Aorta (tissue), 5 donors: ENCODE measurements at regions of chr6 and their contacts with region 1.

Region 1: DNA sequence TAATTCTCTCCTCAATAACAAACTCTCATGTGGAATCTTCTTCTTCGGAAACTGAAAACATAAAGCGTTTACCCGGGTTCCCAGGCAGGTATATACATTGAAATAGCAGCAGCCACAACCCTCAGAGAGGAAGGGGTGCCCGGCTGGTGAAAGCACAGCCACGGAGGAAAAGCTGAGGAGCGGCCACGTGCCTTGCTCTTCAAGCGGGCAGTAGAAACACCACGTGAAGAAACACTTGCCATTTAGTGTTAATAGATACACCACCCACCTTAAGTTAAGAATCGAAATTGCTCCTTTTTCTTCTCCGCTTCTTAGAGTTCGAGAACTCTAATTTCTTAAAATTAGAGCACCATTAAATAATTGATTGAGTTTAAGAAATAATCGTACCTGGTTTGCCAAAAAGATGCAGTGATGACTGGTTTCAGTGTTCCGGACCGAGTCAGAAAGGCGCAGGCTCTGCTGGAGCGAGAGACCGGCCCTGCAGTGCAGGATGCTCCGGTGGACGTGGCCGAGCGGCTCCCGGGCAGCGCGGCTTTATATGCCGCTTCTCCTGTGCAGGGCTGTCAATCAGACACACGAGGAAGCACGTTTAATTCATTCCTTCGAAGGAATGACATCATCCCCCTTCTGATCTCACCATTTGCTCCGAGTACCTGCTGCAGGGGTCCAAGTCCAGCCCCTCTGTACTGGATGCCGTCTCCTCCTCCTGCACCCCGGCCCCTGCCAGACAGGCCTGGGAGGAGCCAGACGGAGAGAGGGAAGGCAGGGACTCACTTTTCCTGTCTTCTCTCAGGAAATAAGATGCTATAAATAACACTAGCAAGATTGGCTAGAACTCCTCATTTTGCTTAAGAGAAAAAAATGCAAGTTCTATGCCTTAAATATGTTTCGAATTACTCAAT is at the start of gene THBS2:
- DNase-seq: peak; percentile 91 to 94
- ATAC-seq: peak; percentile 86
- H3K4me3 ChIP-seq: peak within 1 kb of the TSS; percentile 60 to 68
- H3K27ac ChIP-seq: peak within 1 kb of the TSS in 1 of 2 donors; percentile 73
- H3K4me1 ChIP-seq: no peaks in the 10 kb centered on the region
- H3K27me3 ChIP-seq: no peaks in the 10 kb centered on the region
- total RNA-seq, gene THBS2: 700 to 1,026 TPM

Region 2: GRCh38 chr6:169452117-169452868 is 198.7 kb after region 1 on chr6:
- intact Hi-C with region 1: loop called in 1 of 2 experiments (anchors 5 kb)
- DNase-seq: peak; percentile 88 to 94
- ATAC-seq: peak; percentile 91
- H3K4me3 ChIP-seq: peak overlapping the region; percentile 21 to 28
- H3K27ac ChIP-seq: peak overlapping the region; percentile 88 to 89
- H3K4me1 ChIP-seq: no peaks in the 10 kb centered on the region
- H3K27me3 ChIP-seq: no peaks in the 10 kb centered on the region